ENCODE measurements at regions of chr2 and their contacts with region 1.

Region 1: GRCh38 chr2:10072656-10073480 is 7.3 kb downstream of the CYS1 start:
- DNase-seq: peak; percentile 97
- H3K4me3 ChIP-seq: no peak overlapping the region; a peak in 1 of 4 replicates
- H3K27ac ChIP-seq: no peak overlapping the region
- H3K4me1 ChIP-seq: peaks cover 0 to 2% of the 10 kb centered on the region in 2 experiments; a peak in 1 of 4 replicates
- H3K27me3 ChIP-seq: peaks cover 17% of the 10 kb centered on the region; the same call in 1 of the 2 replicates
- CTCF ChIP-seq: peak; percentile 96
- EP300 ChIP-seq: no peak
- RAD21 ChIP-seq: peak; percentile 91

Region 2: DNA sequence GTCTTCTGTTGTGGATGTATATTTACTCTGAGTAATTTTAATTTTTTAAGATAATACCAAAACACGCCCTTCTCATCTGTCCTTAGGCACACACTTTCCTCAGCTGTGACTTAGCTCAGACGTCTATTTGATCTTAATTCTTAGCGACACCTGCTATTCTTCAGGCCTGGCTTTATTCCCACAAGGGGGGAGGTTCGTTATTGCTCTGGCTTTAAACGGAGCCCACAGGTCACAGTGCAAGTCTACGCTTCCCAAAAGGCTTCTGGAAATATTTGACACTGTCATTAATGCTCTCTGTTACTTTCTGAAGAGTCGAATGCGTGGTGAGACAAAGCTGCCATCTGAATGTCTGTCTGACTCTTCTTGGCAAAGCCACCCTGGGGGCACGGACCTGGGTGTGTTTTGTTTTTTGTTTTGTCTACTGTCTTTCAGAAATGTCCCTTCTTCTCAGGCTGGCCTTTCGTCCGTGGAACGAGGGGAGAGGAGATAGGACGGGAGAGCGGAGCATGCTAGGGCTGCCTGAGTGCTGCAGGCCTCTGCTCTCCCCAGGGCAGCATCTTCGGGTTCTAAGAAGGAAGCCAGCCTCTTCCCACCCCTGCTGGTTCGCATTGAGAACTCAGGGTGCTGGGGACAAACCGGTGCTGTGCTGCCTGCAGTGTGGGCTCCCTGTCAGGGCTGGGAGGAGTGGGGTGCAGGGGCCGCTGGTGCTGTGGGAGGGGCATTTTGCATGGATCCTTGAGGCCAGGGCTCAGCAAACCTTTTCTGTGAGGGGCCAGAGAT is 804.4 kb before region 1 on chr2:
- CTCF ChIA-PET with region 1: no interaction called
- POLR2A ChIA-PET with region 1: no interaction called
- DNase-seq: no peak
- H3K4me3 ChIP-seq: no peak overlapping the region
- H3K27ac ChIP-seq: peak overlapping the region in 1 of 2 experiments; percentile 48; a peak in 1 of 4 replicates
- H3K4me1 ChIP-seq: peaks cover 17 to 36% of the 10 kb centered on the region in 2 experiments; a peak in 3 of 4 replicates
- H3K27me3 ChIP-seq: no peaks in the 10 kb centered on the region
- CTCF ChIP-seq: no peak
- EP300 ChIP-seq: no peak
- RAD21 ChIP-seq: no peak

Region 3: DNA sequence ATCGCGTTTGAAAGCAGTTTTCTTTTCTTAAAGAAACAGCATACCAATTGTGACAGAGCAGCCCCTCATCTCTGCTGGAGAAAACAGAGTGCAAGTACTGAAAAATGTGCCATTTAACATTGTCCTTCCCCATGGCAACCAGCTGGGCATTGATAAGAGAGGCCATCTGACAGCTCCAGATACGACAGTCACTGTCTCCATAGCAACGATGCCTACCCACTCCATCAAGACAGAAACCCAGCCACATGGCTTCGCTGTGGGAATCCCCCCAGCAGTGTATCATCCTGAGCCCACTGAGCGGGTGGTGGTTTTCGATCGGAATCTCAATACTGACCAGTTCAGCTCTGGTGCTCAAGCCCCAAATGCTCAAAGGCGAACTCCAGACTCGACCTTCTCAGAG is 111.9 kb before region 1 on chr2:
- CTCF ChIA-PET with region 1: interaction called, 12 read pairs
- POLR2A ChIA-PET with region 1: no interaction called
- DNase-seq: peak; percentile 88
- H3K4me3 ChIP-seq: no peak overlapping the region
- H3K27ac ChIP-seq: no peak overlapping the region; a peak in 1 of 4 replicates
- H3K4me1 ChIP-seq: peaks cover 0 to 9% of the 10 kb centered on the region in 2 experiments; a peak in 2 of 4 replicates
- H3K27me3 ChIP-seq: no peaks in the 10 kb centered on the region
- CTCF ChIP-seq: no peak
- EP300 ChIP-seq: no peak
- RAD21 ChIP-seq: no peak

Region 4: DNA sequence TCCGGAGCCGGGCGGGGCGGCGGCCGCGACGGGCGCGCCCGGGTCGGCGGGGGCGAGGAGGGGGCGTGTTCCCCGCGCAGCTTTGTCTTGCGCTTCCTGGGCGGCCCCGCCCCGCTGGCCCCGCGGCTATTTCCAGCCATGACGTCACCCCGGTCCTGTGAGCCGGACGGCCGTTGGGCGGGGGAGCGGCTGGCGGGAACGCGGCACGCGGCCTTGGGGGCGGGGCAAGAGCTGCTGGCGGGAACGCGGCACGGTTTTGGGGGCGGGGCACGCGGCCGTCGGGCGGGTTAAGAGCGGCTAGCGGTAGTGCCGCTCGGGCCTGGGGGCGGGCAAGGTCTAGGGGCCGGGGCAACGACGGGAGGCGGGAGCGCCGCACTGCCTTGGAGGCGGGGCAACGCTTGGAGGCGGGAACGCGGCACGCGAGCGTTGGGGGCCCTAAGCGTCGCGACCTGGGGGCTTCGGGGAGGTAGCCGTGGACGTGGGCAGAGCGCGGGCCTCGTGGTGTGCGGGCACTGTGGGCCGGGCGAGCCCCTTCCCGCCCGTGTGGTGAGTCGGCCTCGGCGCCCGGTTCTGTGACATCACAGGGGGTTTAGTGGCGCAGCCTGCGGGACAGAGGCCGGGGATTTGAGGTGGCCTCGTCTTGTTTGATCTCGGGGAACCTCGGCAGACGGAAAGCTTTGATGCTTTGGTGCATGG is 28.8 kb before region 1 on chr2:
- CTCF ChIA-PET with region 1: interaction called, 12 read pairs
- POLR2A ChIA-PET with region 1: no interaction called
- DNase-seq: peak; percentile 98
- H3K4me3 ChIP-seq: peak overlapping the region; percentile 59 to 68
- H3K27ac ChIP-seq: peak overlapping the region; percentile 58 to 77; a peak in 2 of 4 replicates
- H3K4me1 ChIP-seq: peaks cover 6 to 22% of the 10 kb centered on the region in 2 experiments; a peak in 1 of 4 replicates
- H3K27me3 ChIP-seq: no peaks in the 10 kb centered on the region
- CTCF ChIP-seq: no peak
- EP300 ChIP-seq: no peak
- RAD21 ChIP-seq: no peak

Region 5: DNA sequence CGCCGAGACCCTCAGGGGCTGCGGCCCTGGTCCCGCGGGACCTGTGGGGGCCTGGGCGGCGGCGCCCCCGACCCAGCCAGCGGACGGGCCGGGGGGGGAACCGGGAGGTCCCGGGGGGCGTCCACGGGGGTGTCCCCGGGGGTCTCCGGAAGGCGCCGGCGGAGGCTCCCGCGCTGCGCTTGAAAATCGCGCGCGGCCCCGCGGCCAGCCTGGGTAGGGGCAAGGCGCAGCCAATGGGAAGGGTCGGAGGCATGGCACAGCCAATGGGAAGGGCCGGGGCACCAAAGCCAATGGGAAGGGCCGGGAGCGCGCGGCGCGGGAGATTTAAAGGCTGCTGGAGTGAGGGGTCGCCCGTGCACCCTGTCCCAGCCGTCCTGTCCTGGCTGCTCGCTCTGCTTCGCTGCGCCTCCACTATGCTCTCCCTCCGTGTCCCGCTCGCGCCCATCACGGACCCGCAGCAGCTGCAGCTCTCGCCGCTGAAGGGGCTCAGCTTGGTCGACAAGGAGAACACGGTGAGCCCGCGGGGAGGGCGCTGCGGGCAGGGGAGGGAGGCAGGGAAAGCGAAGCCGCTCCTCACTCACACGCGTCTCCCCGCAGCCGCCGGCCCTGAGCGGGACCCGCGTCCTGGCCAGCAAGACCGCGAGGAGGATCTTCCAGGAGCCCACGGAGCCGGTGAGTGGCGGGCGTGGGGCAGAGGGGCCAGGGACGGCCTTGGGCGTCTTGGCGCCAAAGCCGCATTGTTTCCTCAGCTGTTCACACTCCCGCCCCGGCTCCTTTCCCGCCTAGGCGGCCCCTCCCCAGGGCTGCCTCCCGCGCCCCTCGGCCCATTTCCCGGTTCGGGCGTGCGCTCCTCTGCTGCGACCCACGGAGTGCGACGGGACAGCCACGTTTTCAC is 49.8 kb after region 1 on chr2 and contains the start of gene RRM2:
- CTCF ChIA-PET with region 1: interaction called, 144 read pairs
- POLR2A ChIA-PET with region 1: interaction called, 9 read pairs
- DNase-seq: peak; percentile 99
- H3K4me3 ChIP-seq: peak within 1 kb of the TSS; percentile 63 to 69
- H3K27ac ChIP-seq: peak within 1 kb of the TSS; percentile 84 to 87
- H3K4me1 ChIP-seq: peaks cover 12 to 30% of the 10 kb centered on the region in 2 experiments; a peak in 3 of 4 replicates
- H3K27me3 ChIP-seq: no peaks in the 10 kb centered on the region
- CTCF ChIP-seq: no peak
- EP300 ChIP-seq: no peak
- RAD21 ChIP-seq: no peak
- polyA plus RNA-seq, gene RRM2: 23.6 and 38.9 TPM in 2 replicates

Region 6: DNA sequence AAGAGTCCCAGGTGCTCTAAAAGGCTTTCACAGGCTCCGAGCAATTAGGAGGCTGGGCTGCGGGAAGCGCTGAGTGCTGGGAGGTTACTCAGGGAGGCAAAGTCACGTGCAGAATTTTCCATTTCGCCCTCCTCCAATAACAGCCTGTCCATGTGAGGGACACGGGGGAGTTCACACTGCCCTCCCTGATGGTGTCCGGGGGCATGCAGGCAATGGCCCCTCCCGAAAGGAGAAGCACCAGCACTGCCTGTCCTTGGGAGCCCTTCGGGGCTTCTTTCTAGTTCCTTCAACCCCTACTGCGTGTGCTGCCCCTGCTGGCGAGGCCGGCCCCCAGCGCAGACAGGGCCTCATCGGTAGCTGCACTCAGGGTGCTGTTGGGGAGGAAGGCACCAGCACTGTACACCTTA is 166.7 kb after region 1 on chr2:
- CTCF ChIA-PET with region 1: no interaction called
- POLR2A ChIA-PET with region 1: no interaction called
- DNase-seq: no peak
- H3K4me3 ChIP-seq: no peak overlapping the region
- H3K27ac ChIP-seq: no peak overlapping the region
- H3K4me1 ChIP-seq: peaks cover 0 to 5% of the 10 kb centered on the region in 2 experiments; a peak in 1 of 4 replicates
- H3K27me3 ChIP-seq: no peaks in the 10 kb centered on the region; the same call in 1 of the 2 replicates
- CTCF ChIP-seq: no peak
- EP300 ChIP-seq: no peak
- RAD21 ChIP-seq: no peak

Region 7: DNA sequence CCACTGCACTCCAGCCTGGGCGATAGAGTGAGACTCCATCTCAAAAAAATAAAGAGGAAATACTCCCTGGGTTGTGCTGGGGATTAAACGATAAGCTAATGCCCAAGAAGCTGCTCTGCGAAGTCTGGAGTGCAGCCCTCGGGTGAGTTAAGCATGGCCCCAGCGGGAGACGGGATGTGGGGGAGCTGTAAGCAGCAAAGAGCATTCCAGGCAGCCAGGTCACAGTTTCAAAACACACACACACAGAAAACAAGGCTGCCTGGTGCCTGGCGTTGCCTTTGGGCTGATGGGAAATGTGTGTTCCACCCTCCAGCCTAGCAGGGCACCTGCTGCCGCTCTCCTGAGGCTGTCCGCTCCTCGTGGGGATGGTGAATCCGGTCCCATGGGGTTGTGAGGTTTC is 351.2 kb after region 1 on chr2:
- CTCF ChIA-PET with region 1: interaction called, 14 read pairs
- POLR2A ChIA-PET with region 1: no interaction called
- DNase-seq: no peak
- H3K4me3 ChIP-seq: no peak overlapping the region
- H3K27ac ChIP-seq: no peak overlapping the region
- H3K4me1 ChIP-seq: peaks cover 0 to 3% of the 10 kb centered on the region in 2 experiments; a peak in 1 of 4 replicates
- H3K27me3 ChIP-seq: no peaks in the 10 kb centered on the region
- CTCF ChIP-seq: no peak
- EP300 ChIP-seq: no peak
- RAD21 ChIP-seq: no peak

Measured in SK-N-SH (cell line).